Activated CD4-positive, alpha-beta T cell treated with anti-CD3 and anti-CD28 coated beads, Interleukin-2, amount 10 ng/mL, durations not matched to agents 24 days and 14 days (primary cell): ENCODE measurements at regions of chr2 and their contacts with region 1.

Region 1: GRCh38 chr2:230908595-230909191 is 16.3 kb downstream of the GPR55 start:
- DNase-seq: peak; percentile 72
- H3K4me3 Mint-ChIP-seq: peak overlapping the region; percentile 46
- H3K27ac Mint-ChIP-seq: peak overlapping the region; percentile 87
- H3K4me1 Mint-ChIP-seq: peaks cover 40% of the 10 kb centered on the region
- H3K27me3 Mint-ChIP-seq: peaks cover 28% of the 10 kb centered on the region

Region 2: GRCh38 chr2:230824406-230824978 is 84.2 kb before region 1 on chr2:
- intact Hi-C with region 1: loop called (anchors 2 kb)
- DNase-seq: peak; percentile 89
- H3K4me3 Mint-ChIP-seq: peak overlapping the region; percentile 55
- H3K27ac Mint-ChIP-seq: no peak overlapping the region
- H3K4me1 Mint-ChIP-seq: peaks cover 11% of the 10 kb centered on the region
- H3K27me3 Mint-ChIP-seq: peaks cover 36% of the 10 kb centered on the region

Region 3: GRCh38 chr2:230919240-230919639 is 10.5 kb after region 1 on chr2:
- intact Hi-C with region 1: loop called (anchors 1 kb)
- DNase-seq: no peak
- H3K4me3 Mint-ChIP-seq: no peak overlapping the region
- H3K27ac Mint-ChIP-seq: no peak overlapping the region
- H3K4me1 Mint-ChIP-seq: peaks cover 29% of the 10 kb centered on the region
- H3K27me3 Mint-ChIP-seq: peaks cover 41% of the 10 kb centered on the region

Region 4: GRCh38 chr2:230942920-230943896 is 34.5 kb after region 1 on chr2:
- intact Hi-C with region 1: loop called (anchors 2 kb)
- DNase-seq: peak; percentile 65
- H3K4me3 Mint-ChIP-seq: peak overlapping the region; percentile 9
- H3K27ac Mint-ChIP-seq: peak overlapping the region; percentile 22
- H3K4me1 Mint-ChIP-seq: peaks cover 10% of the 10 kb centered on the region
- H3K27me3 Mint-ChIP-seq: peaks cover 30% of the 10 kb centered on the region

Region 5: GRCh38 chr2:230987137-230988020 is 78.7 kb after region 1 on chr2:
- intact Hi-C with region 1: loop called (anchors 1 kb)
- DNase-seq: peak; percentile 94
- H3K4me3 Mint-ChIP-seq: peak overlapping the region; percentile 65
- H3K27ac Mint-ChIP-seq: peak overlapping the region; percentile 11
- H3K4me1 Mint-ChIP-seq: peaks cover 19% of the 10 kb centered on the region
- H3K27me3 Mint-ChIP-seq: peaks cover 34% of the 10 kb centered on the region